ENCODE measurements at regions of chr5 and their contacts with region 1.

Region 1: DNA sequence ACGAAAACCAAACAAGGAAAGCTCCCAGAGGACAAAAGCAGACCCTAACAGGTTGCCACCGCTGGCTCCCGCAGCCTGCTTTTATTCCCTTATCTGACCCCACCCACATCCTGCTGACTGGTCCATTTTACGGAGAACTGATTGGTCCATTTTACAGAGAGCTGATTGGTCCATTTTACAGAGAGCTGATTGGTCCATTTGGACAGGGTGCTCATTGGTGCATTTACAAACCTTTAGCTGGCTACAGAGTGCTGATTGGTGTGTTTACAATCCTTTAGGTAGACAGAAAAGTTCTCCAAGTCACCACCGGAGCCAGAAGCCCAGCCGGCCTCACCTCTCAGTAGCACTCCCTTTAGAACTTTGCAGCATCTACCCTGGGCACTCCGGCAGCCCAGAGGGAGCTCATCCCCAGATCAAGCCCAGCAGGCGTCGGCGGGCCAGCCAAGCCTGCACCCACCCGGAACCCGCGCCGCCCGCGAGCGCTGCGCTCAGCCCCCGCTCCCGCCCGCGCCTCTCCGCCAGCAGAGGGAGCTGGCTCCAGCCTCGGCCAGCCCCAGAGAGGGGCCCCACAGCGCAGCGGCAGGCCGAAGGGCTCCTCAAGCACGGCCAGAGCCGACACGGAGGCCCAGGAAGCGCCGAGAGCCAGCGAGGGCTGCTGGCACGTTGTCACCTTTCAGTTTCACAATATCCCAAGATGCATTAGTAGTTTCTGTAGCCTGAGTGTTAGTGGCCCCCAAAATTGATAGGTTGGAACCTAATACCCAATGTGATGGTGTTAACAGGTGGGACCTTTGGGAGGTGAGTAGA is 35.3 kb upstream of the CLPTM1L start:
- DNase-seq: peak; percentile 76
- ATAC-seq: peak; percentile 95
- H3K4me3 Mint-ChIP-seq: peak overlapping the region; percentile 27; the same call in 1 of the 2 replicates
- H3K27ac Mint-ChIP-seq: no peak overlapping the region
- H3K4me1 Mint-ChIP-seq: peaks cover 1% of the 10 kb centered on the region; the same call in 1 of the 2 replicates
- H3K27me3 Mint-ChIP-seq: peaks cover 52% of the 10 kb centered on the region
- CTCF ChIP-seq: peak; percentile 61; the same call in 1 of the 2 replicates

Region 2: GRCh38 chr5:1229822-1230221 is 150.4 kb before region 1 on chr5:
- CTCF ChIA-PET with region 1: no interaction called
- POLR2A ChIA-PET with region 1: no interaction called
- DNase-seq: no peak
- ATAC-seq: peak; percentile 39; the same call in 1 of the 2 replicates
- H3K4me3 Mint-ChIP-seq: no peak overlapping the region
- H3K27ac Mint-ChIP-seq: no peak overlapping the region
- H3K4me1 Mint-ChIP-seq: peaks cover 4% of the 10 kb centered on the region
- H3K27me3 Mint-ChIP-seq: no peaks in the 10 kb centered on the region
- CTCF ChIP-seq: no peak

Region 3: GRCh38 chr5:1268666-1269065 is 111.5 kb before region 1 on chr5:
- CTCF ChIA-PET with region 1: no interaction called
- POLR2A ChIA-PET with region 1: no interaction called
- DNase-seq: no peak
- ATAC-seq: no peak
- H3K4me3 Mint-ChIP-seq: no peak overlapping the region
- H3K27ac Mint-ChIP-seq: no peak overlapping the region
- H3K4me1 Mint-ChIP-seq: no peaks in the 10 kb centered on the region
- H3K27me3 Mint-ChIP-seq: no peaks in the 10 kb centered on the region
- CTCF ChIP-seq: no peak

Region 4: GRCh38 chr5:1356873-1357787 is 23.1 kb before region 1 on chr5:
- CTCF ChIA-PET with region 1: interaction called, 22 read pairs
- POLR2A ChIA-PET with region 1: no interaction called
- DNase-seq: no peak
- ATAC-seq: peak; percentile 64
- H3K4me3 Mint-ChIP-seq: no peak overlapping the region
- H3K27ac Mint-ChIP-seq: no peak overlapping the region
- H3K4me1 Mint-ChIP-seq: peaks cover 15% of the 10 kb centered on the region
- H3K27me3 Mint-ChIP-seq: no peaks in the 10 kb centered on the region
- CTCF ChIP-seq: no peak

Region 5: GRCh38 chr5:1394635-1395472 is 14.6 kb after region 1 on chr5:
- CTCF ChIA-PET with region 1: interaction called, 10 read pairs
- POLR2A ChIA-PET with region 1: no interaction called
- DNase-seq: no peak
- ATAC-seq: no peak
- H3K4me3 Mint-ChIP-seq: no peak overlapping the region
- H3K27ac Mint-ChIP-seq: no peak overlapping the region
- H3K4me1 Mint-ChIP-seq: no peaks in the 10 kb centered on the region; the same call in 1 of the 2 replicates
- H3K27me3 Mint-ChIP-seq: no peaks in the 10 kb centered on the region; the same call in 1 of the 2 replicates
- CTCF ChIP-seq: no peak

Region 6: DNA sequence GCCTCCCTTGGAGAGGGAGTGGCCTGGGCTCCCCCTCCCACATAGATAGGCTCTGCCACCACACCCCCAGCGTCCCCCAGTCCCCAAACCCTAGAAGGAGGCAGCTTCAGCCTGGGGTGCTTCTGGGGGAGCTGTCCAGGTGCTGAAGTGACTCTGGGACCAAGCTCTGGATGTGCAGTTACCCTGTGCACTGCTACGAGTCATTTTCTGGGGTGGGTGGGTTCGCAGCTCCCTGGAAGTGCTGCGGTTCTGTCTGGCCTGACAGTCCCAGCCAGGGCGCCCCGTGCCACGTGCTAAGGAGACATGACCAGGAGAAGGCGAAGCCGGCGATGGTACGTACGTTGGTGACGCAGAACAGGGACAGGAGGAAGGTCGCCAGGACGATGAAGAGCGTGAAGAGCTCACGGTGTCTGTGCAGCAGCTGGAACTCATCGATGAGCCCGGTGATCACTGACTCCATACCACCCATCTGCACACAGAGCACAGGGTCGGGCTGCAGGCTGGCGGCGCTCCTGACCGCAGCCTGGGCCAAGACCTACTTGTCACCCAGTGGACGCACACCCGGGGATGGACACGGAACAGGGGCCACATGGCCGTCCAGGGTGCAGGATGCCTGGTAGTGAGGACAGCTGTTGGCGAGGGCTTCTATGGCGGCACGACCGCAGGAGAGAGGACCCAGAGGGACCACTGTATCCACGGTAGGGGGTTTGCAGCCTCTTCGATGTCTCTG is 29.3 kb after region 1 on chr5:
- CTCF ChIA-PET with region 1: interaction called, 27 read pairs
- POLR2A ChIA-PET with region 1: no interaction called
- DNase-seq: peak; percentile 74
- ATAC-seq: peak; percentile 60
- H3K4me3 Mint-ChIP-seq: no peak overlapping the region
- H3K27ac Mint-ChIP-seq: no peak overlapping the region; the same call in 1 of the 2 replicates
- H3K4me1 Mint-ChIP-seq: peaks cover 10% of the 10 kb centered on the region
- H3K27me3 Mint-ChIP-seq: no peaks in the 10 kb centered on the region
- CTCF ChIP-seq: no peak

Region 7: GRCh38 chr5:1467768-1468534 is 87.7 kb after region 1 on chr5:
- CTCF ChIA-PET with region 1: interaction called, 27 read pairs
- POLR2A ChIA-PET with region 1: no interaction called
- DNase-seq: peak; percentile 80
- ATAC-seq: peak; percentile 69
- H3K4me3 Mint-ChIP-seq: no peak overlapping the region
- H3K27ac Mint-ChIP-seq: peak overlapping the region; percentile 91
- H3K4me1 Mint-ChIP-seq: no peaks in the 10 kb centered on the region; the same call in 1 of the 2 replicates
- H3K27me3 Mint-ChIP-seq: no peaks in the 10 kb centered on the region
- CTCF ChIP-seq: peak; percentile 52; the same call in 1 of the 2 replicates